ENCODE measurements at regions of chr19 and their contacts with region 1.

Region 1: GRCh38 chr19:1205114-1206062 is at the start of gene STK11:
- DNase-seq: peak; percentile 99
- H3K4me3 Mint-ChIP-seq: peak within 1 kb of the TSS; percentile 95
- H3K27ac Mint-ChIP-seq: peak within 1 kb of the TSS; percentile 93
- H3K4me1 Mint-ChIP-seq: peaks cover 14% of the 10 kb centered on the region
- H3K27me3 Mint-ChIP-seq: no peaks in the 10 kb centered on the region
- total RNA-seq, gene STK11: 69.6 and 71.3 TPM in 2 replicates

Region 2: DNA sequence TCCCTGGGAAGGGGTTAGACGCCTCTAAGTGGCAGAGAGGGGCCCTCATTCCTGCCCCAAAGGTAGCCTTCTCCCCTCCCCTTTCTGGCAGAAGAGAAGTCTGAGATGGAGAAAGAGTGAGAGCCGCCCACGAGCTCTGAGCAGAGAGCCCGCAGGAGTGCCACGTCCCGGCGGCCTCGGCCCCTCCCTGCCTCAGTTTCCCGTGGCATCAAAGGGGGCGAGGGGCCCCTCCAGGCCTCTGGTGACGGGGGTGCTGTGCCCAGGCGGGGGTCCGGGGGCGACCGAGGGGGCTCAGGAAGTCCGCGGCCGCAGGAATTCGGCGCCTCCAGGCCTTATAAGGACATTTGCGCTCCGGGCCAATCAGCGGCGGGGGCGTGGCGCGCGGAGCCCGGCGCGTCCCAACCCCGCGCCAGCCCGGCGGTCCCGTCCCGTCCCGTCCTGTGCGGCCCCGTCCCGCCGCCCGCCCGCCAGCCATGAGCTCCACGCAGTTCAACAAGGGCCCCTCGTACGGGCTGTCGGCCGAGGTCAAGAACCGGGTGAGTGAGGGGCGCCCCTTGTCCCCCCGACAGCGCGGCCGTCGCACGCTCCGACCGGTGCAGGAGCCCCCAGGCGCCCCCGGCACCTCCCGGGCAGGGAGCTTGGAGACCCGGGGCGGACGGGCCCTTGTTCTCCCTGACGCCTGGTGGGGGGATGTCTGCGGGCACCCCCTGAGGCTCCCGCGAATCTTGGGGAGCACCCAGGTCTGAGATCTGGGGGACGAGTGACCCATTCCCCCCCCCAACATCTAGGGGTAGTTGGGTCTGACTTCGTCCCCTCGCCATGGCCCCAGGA is 179.0 kb before region 1 on chr19 and contains the start of gene CNN2:
- intact Hi-C with region 1: loop called (anchors 1 kb)
- DNase-seq: peak; percentile 73
- H3K4me3 Mint-ChIP-seq: peak within 1 kb of the TSS; percentile 95
- H3K27ac Mint-ChIP-seq: peak within 1 kb of the TSS; percentile 87
- H3K4me1 Mint-ChIP-seq: peaks cover 21% of the 10 kb centered on the region
- H3K27me3 Mint-ChIP-seq: peaks cover 2% of the 10 kb centered on the region
- total RNA-seq, gene CNN2: 112 and 114 TPM in 2 replicates

Region 3: DNA sequence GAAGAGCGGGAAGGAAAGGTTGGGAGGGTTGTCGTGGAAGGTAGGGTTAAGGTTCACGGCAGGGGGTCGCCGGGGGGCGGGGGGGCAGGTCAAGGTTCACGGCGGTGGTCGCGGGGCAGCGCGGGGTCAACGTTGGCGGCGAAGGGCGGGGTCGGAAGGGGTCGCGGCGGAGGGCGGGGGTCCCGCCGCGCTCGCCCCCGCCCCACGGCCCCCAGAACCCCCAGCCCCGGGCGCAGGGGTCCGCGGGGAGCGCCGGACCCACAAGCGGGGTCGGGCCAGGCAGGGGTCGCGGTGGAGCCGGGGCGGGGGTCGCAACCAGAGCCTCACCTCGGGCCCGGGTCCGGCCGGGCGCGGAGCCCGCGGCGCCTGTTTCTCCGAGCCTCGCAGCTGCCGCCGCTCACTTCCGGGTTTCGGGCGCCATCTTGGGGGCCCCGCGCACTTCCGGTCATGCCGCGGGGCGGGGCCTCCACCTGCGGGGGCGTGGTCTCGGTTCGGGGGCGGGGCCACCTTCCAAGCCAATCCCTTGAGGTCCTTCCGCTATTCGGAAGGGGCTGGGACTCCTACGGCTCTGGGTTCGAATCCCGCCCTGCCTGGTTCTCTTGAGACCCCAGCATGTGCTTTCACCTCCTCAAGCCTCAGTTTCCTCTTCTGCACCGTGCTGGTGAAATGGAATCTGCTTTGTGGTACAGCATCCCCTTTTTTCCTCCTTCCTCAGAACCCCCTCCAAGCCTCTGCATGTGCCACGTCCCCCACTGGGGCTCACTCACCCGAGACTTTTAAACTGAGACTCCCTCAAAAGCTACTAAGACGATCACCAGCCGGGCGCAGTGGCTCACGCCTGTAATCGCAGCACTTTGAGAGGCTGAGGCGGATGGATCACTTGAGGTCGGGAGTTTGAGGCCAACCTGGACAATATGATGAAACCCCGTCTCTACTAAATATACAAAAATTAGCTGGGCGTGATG is 31.3 kb before region 1 on chr19 and contains the start of gene SBNO2:
- intact Hi-C with region 1: loop called (anchors 1 kb)
- DNase-seq: peak; percentile 88
- H3K4me3 Mint-ChIP-seq: peak within 1 kb of the TSS; percentile 89
- H3K27ac Mint-ChIP-seq: peak within 1 kb of the TSS; percentile 88
- H3K4me1 Mint-ChIP-seq: peaks cover 25% of the 10 kb centered on the region
- H3K27me3 Mint-ChIP-seq: no peaks in the 10 kb centered on the region
- total RNA-seq, gene SBNO2: 95.5 and 96.9 TPM in 2 replicates

Region 4: GRCh38 chr19:1241417-1242095 is 36.2 kb after region 1 on chr19 and contains the start of gene ATP5F1D:
- intact Hi-C with region 1: loop called (anchors 1 kb)
- DNase-seq: peak; percentile 91
- H3K4me3 Mint-ChIP-seq: peak within 1 kb of the TSS; percentile 91
- H3K27ac Mint-ChIP-seq: peak within 1 kb of the TSS; percentile 84
- H3K4me1 Mint-ChIP-seq: peaks cover 27% of the 10 kb centered on the region
- H3K27me3 Mint-ChIP-seq: peaks cover 16% of the 10 kb centered on the region
- total RNA-seq, gene ATP5F1D: 234 and 239 TPM in 2 replicates

Region 5: DNA sequence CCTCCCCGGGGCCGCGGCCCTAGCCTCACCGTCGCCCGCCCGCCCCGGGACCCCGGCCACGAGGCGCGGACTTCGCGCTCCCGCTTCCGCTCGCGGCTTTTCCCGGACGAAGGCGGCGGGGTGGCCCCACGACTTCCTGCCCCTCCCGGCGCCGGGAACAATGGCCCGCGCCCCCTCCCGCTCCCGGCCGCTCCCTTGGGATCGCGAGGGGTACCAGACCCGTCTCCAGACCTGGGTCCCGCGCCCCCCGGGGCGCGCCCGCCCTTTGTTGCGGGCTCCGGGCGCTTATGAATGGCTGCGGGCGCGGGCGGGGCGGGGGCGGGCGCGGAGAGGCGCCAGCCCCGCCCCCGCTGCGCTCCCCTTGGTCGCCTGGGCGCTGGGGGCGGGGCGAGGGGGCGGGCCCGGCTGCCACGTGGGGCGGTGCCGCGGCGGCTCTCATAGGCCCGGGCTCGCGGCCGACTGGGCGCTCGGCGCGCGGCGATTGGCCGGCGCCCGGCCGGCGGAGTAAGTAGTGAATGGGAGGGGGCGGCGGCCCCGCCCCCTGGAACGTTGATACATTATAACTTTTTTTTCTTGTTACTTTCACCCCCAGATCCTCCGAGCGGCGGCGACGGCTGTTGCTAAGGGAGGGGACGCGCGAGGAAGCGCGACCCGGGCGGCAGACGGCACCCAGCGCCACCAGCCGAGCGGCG is 44.1 kb after region 1 on chr19:
- intact Hi-C with region 1: loop called (anchors 1 kb)
- DNase-seq: peak; percentile 91
- H3K4me3 Mint-ChIP-seq: peak overlapping the region; percentile 82
- H3K27ac Mint-ChIP-seq: peak overlapping the region; percentile 86
- H3K4me1 Mint-ChIP-seq: peaks cover 5% of the 10 kb centered on the region
- H3K27me3 Mint-ChIP-seq: no peaks in the 10 kb centered on the region

Region 6: DNA sequence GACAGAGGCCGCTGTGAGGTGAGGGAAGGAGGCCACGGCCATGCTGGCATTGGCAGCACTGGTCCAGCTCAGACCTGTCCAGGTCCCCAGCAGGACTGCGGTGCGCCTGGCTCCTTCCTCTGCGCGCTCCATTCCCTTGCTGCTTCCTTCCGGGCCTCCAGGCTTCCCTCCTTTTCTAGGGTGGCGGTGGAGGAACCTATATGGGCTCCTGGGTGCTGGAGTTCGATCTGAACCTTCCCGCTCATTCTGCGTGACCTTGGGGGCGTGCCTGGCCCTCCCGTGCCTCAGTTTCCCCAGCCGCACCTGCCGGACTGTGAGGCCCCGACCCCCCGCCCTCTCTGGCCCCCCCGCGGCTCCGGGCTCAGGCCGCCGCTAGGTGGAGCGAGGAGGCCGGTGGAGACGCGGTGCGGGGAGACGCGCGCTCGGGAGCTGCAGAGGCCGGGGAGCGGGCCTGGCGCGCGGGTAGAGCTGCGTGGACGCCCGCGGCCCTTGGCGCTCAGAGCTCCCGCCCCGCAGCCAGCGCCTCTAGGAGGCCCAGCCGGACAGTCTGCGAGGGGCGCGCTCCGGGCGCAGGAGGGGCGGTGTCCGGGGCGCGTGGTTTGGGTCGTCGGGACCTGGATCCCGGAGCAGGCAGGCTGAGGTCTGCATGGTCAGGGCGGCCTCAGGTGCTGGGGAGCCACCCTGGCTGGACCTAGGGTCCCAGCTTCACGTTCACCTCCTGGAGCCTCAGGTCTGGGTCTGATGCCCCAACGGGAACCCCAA is 110.3 kb after region 1 on chr19:
- intact Hi-C with region 1: no loop called
- DNase-seq: no peak
- H3K4me3 Mint-ChIP-seq: no peak overlapping the region
- H3K27ac Mint-ChIP-seq: no peak overlapping the region
- H3K4me1 Mint-ChIP-seq: no peaks in the 10 kb centered on the region
- H3K27me3 Mint-ChIP-seq: peaks cover 11% of the 10 kb centered on the region